Caco-2 (cell line): ENCODE measurements at regions of chr1 and their contacts with region 1.

Region 1: DNA sequence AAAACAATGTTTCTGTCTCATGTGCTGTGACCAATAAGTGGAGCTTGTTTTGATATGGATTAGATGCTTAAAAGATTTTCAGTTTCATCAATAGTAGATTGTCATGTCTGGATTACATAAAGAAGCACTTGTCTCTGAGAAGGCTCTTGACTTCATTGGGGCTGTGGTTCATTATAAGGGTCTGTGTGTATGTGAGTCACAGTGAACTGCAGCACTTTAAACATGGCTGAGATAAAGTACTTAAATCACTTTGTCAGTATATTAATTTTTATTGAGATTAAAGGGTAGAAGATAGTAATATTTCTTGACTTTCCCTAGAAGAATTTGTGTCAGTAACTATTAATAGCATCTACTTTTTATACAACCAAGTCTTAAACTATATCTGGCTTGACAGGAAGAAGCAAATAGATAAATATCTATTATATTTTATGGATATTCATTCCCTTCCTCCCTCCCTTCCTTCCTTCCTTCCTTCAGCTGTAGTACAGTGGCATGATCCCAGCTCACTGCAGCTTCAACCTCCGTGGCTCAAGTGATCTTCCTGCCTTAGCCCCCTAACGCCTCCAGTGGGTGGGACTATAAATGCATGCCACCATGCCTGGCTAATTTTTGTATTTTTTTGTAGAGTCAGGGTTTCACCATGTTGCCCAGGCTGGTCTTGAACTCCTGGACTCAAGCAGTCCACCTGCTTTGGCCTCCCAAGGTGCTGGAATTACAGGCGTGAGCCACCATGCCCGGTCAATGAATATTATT is 48.8 kb downstream of the ZFYVE9 start:
- DNase-seq: no peak
- H3K4me3 ChIP-seq: no peak overlapping the region
- H3K4me3 Mint-ChIP-seq: no peak overlapping the region
- H3K27ac Mint-ChIP-seq: no peak overlapping the region
- H3K4me1 ChIP-seq: peaks cover 10% of the 10 kb centered on the region; the same call in 1 of the 2 replicates
- H3K4me1 Mint-ChIP-seq: peaks cover 22% of the 10 kb centered on the region
- H3K27me3 ChIP-seq: no peaks in the 10 kb centered on the region
- H3K27me3 Mint-ChIP-seq: no peaks in the 10 kb centered on the region
- CTCF ChIP-seq: no peak

Region 2: GRCh38 chr1:52334906-52335528 is 144.3 kb after region 1 on chr1:
- CTCF ChIA-PET with region 1: interaction called, 13 read pairs
- POLR2A ChIA-PET with region 1: no interaction called
- intact Hi-C with region 1: no loop called
- DNase-seq: no peak
- H3K4me3 ChIP-seq: no peak overlapping the region
- H3K4me3 Mint-ChIP-seq: no peak overlapping the region
- H3K27ac Mint-ChIP-seq: no peak overlapping the region
- H3K4me1 ChIP-seq: no peaks in the 10 kb centered on the region
- H3K4me1 Mint-ChIP-seq: no peaks in the 10 kb centered on the region
- H3K27me3 ChIP-seq: no peaks in the 10 kb centered on the region
- H3K27me3 Mint-ChIP-seq: no peaks in the 10 kb centered on the region
- CTCF ChIP-seq: no peak